OCI-LY7 (cell line): ENCODE measurements at regions of chr12 and their contacts with region 1.

Region 1: DNA sequence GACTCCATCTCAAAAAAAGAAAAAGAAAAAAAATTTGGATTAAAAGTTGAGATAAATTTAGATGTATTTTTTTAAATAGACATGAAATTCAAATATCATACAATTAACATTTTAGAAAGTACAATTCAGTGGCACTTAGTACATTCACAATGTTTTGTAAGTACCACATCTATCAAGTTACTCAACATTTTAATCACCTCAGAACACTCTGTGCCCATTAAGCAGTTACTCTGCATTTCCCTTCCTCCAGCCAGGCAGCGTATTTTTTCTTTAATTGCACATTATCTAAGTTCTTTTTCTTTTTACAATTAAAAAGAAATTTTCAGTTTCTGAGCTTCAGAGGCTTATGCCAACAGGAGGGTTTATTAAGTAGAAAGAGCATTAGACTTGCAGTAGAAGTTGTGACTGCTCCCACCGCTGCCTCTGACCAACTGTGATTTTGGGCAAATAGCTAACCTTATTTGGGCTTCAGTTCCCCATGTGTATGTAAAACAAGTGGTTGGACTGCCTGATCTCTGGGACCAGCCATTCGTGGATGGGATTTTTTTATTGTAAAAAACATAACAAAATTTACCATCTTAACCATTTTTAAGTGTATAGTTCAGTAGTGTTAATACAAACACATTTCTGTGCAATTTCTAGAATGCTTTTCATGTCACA is 65.7 kb downstream of the WNK1 start:
- DNase-seq: peak; percentile 12
- H3K4me3 ChIP-seq: no peak overlapping the region
- H3K27ac ChIP-seq: no peak overlapping the region
- H3K4me1 ChIP-seq: peaks cover 19% of the 10 kb centered on the region
- CTCF ChIP-seq: no peak

Region 2: DNA sequence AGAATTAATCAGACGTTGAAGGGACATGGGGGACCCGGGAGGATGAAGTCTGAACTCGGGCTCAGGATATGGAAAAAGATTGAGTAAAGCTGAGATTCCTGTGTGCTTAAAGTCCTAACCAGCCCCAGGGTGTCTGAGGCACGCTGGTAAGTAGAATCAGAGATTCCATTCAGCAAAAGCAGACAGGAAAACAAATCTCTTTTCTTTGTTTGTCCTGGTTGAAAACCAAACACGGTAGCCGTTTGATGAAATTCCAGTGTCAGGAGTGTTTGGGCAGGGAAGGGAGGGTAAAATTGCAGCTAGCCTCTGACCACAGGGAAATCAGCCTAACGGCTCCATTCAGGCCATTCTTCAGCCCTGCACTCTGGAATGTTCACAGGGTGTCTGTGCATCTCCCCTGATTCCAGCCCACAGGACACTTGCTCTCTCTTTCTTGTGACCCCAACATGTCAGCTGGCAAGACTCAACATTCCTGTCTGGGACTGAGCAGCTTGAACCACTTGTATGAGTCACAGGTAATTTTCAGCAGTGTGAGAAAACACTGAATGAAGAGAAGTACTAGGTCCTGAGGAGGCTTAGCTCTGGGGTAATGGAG is 185.9 kb before region 1 on chr12:
- CTCF ChIA-PET with region 1: interaction called, 11 read pairs
- POLR2A ChIA-PET with region 1: no interaction called
- intact Hi-C with region 1: no loop called
- DNase-seq: no peak
- H3K4me3 ChIP-seq: no peak overlapping the region
- H3K27ac ChIP-seq: no peak overlapping the region
- H3K4me1 ChIP-seq: peaks cover 13% of the 10 kb centered on the region
- CTCF ChIP-seq: no peak